A673 (cell line): ENCODE measurements at regions of chr10 and their contacts with region 1.

Region 1: DNA sequence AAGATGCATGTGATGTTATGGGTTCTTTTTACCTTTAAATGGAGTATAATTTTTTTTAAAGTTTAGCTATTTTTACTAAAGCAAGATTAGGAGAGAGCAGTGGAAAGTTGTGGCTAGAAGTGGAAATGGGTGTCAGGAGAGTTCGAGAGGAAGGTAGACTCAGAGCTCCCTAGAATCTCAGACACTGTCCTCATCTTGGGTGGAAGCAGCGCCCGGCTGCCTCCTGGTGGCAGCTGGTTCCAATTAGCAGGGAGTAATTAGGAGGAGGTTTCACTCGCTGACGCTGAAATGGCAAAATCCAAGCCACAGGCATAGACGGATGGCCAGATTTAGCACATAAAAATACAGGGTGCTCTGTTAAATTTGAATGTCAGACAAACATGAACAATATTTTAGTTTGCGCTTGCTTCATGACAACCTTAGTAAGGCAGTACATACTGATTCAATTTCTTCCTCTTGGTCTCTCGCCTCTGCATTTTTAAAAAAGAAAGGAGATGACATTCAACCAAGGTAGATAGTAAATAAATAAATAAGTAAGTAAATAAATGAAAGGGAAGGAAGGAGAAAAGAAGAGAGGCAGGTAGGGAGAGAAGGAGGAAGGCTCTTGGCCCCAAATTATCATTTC is 58.5 kb downstream of the LGI1 start:
- DNase-seq: peak; percentile 83
- H3K4me3 ChIP-seq: no peak overlapping the region
- H3K27ac ChIP-seq: no peak overlapping the region
- H3K4me1 ChIP-seq: peaks cover 10% of the 10 kb centered on the region
- H3K27me3 ChIP-seq: no peaks in the 10 kb centered on the region
- CTCF ChIP-seq: peak; percentile 72

Region 2: GRCh38 chr10:93702211-93703001 is 113.8 kb before region 1 on chr10 and contains the start of gene FRA10AC1:
- CTCF ChIA-PET with region 1: interaction called, 7 read pairs
- POLR2A ChIA-PET with region 1: no interaction called
- intact Hi-C with region 1: loop called (anchors 2 kb)
- DNase-seq: peak; percentile 92
- H3K4me3 ChIP-seq: peak within 1 kb of the TSS; percentile 74
- H3K27ac ChIP-seq: peak within 1 kb of the TSS; percentile 81
- H3K4me1 ChIP-seq: no peaks in the 10 kb centered on the region
- H3K27me3 ChIP-seq: no peaks in the 10 kb centered on the region
- CTCF ChIP-seq: peak; percentile 59
- total RNA-seq, gene FRA10AC1: 21.6 and 21.7 TPM in 2 replicates

Region 3: DNA sequence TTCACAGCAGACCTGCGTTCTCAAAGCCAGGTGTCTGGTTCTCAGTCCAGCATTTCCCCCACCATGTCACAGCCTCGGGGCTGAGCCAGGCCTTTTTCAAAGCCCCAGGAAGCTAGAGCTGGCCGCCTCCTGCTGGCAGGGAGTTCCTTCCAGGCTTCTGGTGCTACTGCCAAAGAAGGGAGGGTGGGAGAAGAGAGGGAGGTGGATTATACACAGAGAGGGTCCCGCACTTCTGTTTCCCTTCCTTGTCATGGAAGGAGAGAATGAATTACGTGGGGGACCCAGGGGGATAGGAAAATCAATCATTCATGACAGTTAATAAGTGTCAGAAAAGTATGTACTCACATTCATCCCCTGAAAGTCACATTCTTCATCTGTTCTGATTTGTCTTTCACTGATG is 59.1 kb before region 1 on chr10:
- CTCF ChIA-PET with region 1: no interaction called
- POLR2A ChIA-PET with region 1: no interaction called
- intact Hi-C with region 1: no loop called
- DNase-seq: no peak
- H3K4me3 ChIP-seq: no peak overlapping the region
- H3K27ac ChIP-seq: no peak overlapping the region
- H3K4me1 ChIP-seq: no peaks in the 10 kb centered on the region
- H3K27me3 ChIP-seq: peaks cover 3% of the 10 kb centered on the region
- CTCF ChIP-seq: 0 out of 2 replicates have a peak, but pooled peaks have one; percentile 18

Region 4: DNA sequence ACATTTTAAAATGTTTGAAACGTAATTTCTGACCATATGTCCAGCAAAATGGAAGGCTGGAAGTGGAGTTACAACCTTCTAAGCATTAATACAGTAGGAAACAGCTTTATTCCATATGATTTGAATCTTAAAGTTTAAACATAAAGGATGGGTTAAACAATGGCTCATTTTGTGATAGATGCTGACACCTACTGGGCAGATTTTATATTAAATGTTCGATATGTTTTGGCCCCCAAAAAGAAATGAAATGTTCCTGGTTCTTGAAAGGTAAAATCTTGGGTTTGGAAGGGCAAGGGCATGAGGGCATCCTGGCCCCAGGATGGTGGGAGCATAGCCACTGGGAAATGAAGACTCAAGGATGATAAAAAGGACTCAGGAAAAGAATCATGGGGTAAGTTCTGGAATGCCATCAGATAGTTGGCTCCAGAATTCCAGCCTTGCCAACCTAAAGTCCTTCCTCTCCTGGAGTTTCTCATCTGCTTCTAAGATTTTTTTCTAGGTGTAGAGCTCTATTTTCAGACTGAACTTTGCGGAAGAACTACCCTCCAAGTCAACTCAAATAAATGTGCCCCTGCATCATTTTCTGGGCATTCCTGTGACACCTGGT is 42.9 kb after region 1 on chr10:
- CTCF ChIA-PET with region 1: interaction called, 11 read pairs
- POLR2A ChIA-PET with region 1: no interaction called
- intact Hi-C with region 1: loop called (anchors 2 kb)
- DNase-seq: peak; percentile 33
- H3K4me3 ChIP-seq: no peak overlapping the region
- H3K27ac ChIP-seq: no peak overlapping the region
- H3K4me1 ChIP-seq: peaks cover 7% of the 10 kb centered on the region
- H3K27me3 ChIP-seq: no peaks in the 10 kb centered on the region
- CTCF ChIP-seq: peak; percentile 70

Region 5: GRCh38 chr10:94320285-94320914 is 504.2 kb after region 1 on chr10:
- CTCF ChIA-PET with region 1: interaction called, 9 read pairs
- POLR2A ChIA-PET with region 1: no interaction called
- intact Hi-C with region 1: loop called (anchors 2 kb)
- DNase-seq: peak; percentile 72
- H3K4me3 ChIP-seq: no peak overlapping the region
- H3K27ac ChIP-seq: no peak overlapping the region
- H3K4me1 ChIP-seq: peaks cover 10% of the 10 kb centered on the region
- H3K27me3 ChIP-seq: no peaks in the 10 kb centered on the region
- CTCF ChIP-seq: peak; percentile 92